ENCODE measurements at regions of chr18 and their contacts with region 1.

Region 1: DNA sequence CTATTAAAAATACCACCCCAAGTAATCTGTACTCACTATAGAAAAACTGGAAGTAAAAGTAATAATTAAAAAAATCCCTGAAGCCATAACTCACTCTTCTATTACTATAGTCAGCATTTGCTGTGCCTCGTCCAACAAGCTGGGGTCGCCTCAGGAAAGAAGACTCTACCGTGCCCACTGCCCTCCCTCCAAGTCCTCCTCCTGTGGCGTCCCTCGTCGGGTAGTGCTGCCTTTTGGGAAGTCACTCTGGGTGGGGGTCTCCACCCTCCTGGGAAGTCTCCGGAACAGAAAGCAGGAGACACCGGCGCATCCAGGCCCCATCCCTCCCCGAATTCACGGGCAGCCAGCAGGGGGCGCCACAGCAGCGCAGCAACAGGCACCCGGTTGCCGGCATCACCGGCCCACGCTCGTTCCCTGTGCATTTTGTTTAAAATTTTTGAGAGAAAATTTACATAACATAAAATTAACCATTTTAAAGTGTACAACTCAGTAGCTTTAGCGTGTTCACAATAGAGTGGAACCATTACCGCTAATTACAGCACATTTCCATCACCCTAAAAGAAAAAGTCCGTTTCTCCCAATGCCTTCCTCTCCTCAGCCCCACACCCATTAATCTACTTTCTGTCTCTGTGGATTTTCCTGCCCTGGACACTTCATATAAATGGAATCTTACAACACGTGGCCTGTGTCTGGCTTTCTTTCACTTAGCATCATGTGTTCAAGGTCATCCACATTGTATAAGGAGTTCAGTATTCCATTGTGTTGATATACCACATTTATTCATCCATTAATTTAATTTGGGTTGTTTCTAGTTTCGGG is 62.2 kb downstream of the ADNP2 start:
- DNase-seq: no peak
- H3K4me3 ChIP-seq: peak overlapping the region in 3 of 4 donors; percentile 20 to 44 (median 39)
- H3K27ac ChIP-seq: peak overlapping the region in 3 of 4 donors; percentile 36 to 61 (median 38)
- H3K4me1 ChIP-seq: peaks cover 0 to 17% (median 0%) of the 10 kb centered on the region in 4 donors
- H3K27me3 ChIP-seq: no peaks in the 10 kb centered on the region
- CTCF ChIP-seq: peak; percentile 66 to 91 (median 78)
- EP300 ChIP-seq: no peak
- POLR2A ChIP-seq: no peak

Region 2: GRCh38 chr18:80247403-80247916 is 76.2 kb after region 1 on chr18 and contains the start of gene PARD6G:
- intact Hi-C with region 1: loop called (anchors 2 kb)
- DNase-seq: peak; percentile 93
- H3K4me3 ChIP-seq: peak within 1 kb of the TSS; percentile 60 to 98 (median 88)
- H3K27ac ChIP-seq: peak within 1 kb of the TSS; percentile 49 to 72 (median 63)
- H3K4me1 ChIP-seq: peaks cover 0 to 17% (median 8%) of the 10 kb centered on the region in 4 donors
- H3K27me3 ChIP-seq: no peaks in the 10 kb centered on the region
- CTCF ChIP-seq: no peak
- EP300 ChIP-seq: no peak
- POLR2A ChIP-seq: no peak
- total RNA-seq, gene PARD6G: 6.2 to 13.0 (median 9.6) TPM

Measured in sigmoid colon (tissue), 7 donors.